Left cardiac atrium (tissue), 4 donors: ENCODE measurements at regions of chr3 and their contacts with region 1.

Region 1: DNA sequence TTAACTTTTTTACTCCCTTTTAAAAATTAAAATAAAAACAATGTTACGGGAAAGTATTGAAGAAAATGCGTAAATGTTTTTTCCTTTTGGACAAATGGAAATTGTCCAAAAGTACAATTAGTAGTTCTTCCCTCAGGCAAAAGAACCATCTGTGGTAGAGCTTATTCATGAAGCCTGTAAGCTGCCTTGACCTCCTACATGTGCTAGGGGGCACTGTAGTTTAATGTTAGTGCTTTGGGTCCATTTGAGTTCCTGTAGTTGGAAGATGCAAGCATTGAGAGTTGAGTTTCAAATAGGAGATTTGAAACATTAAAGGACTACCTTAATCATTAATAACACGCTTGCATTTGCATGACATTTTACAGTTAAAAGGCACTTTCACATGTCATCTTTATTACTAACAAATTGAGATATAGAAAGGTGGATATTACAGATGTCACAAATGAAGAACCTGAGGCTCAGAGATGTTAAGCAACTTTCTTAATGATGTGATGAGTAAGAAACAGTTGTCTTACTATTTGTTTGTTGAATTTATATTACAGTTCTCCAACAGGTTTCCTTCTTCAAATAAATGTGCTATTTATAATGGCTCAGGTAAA is 1.8 kb upstream of the ZNF385D start:
- DNase-seq: no peak
- ATAC-seq: peak; percentile 36 to 58

Region 2: DNA sequence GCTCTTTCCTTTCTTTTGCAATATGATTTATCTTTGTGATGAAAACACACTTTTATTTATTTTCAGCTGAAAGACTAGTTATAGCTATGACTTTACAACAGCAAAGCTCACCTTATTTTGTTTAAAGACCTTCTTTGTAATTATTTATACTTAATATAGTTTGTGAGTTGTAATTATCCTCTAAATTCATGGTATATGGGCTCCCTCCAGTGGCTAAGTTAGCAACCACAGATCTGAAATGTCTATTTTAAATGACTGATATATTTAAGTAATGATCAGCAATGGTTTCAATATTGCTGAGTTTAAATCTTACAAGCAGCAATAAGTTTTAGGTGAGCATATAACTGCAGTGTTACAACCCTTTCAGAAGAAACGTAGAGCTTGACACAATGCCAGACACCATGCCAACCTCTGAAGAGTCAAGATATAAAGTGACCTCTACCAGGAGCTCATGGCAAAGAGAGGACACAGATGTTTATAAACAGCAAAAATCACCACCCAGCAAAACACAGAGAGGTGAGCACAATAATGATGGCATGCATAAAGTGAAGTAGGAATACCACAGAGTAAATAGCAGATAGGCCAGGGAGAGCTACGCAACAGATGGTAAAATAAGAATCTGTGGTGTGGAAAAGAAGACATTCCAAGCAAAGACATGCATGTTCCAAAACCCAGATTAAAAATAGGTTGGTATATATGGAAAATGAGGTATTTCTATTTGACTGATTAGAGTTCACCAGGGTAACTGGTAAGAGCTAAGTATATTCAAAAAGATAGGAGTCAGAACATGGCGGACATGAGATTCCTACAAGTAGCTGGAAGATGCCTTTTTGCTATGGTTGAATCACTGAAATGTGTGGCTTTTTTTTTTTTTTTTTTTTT is 141.9 kb after region 1 on chr3:
- intact Hi-C with region 1: loop called (anchors 2 to 5 kb)
- DNase-seq: no peak
- ATAC-seq: no peak